T-cell (primary cell): ENCODE measurements at regions of chr6 and their contacts with region 1.

Region 1: GRCh38 chr6:50889497-50889896 is 70.8 kb downstream of the TFAP2B start:
- DNase-seq: no peak
- ATAC-seq: no peak
- H3K4me3 ChIP-seq: no peak overlapping the region
- H3K4me3 Mint-ChIP-seq: no peak overlapping the region
- H3K27ac ChIP-seq: no peak overlapping the region
- H3K27ac Mint-ChIP-seq: no peak overlapping the region
- H3K4me1 ChIP-seq: no peaks in the 10 kb centered on the region
- H3K4me1 Mint-ChIP-seq: no peaks in the 10 kb centered on the region
- H3K27me3 ChIP-seq: no peaks in the 10 kb centered on the region
- H3K27me3 Mint-ChIP-seq: peaks cover 0 to 4% of the 10 kb centered on the region in 2 donors

Region 2: GRCh38 chr6:50868466-50868865 is 21.0 kb before region 1 on chr6:
- CTCF ChIA-PET with region 1: no interaction called
- POLR2A ChIA-PET with region 1: interaction called in 1 of 2 experiments, 11 read pairs
- DNase-seq: no peak
- ATAC-seq: no peak
- H3K4me3 ChIP-seq: no peak overlapping the region
- H3K4me3 Mint-ChIP-seq: no peak overlapping the region
- H3K27ac ChIP-seq: no peak overlapping the region
- H3K27ac Mint-ChIP-seq: no peak overlapping the region
- H3K4me1 ChIP-seq: no peaks in the 10 kb centered on the region
- H3K4me1 Mint-ChIP-seq: no peaks in the 10 kb centered on the region
- H3K27me3 ChIP-seq: no peaks in the 10 kb centered on the region
- H3K27me3 Mint-ChIP-seq: no peaks in the 10 kb centered on the region